ENCODE measurements at regions of chr1 and their contacts with region 1.

Region 1: GRCh38 chr1:55870106-55870505 is 654.9 kb upstream of the USP24 start:
- DNase-seq: no peak
- H3K4me3 ChIP-seq: no peak overlapping the region
- H3K27ac ChIP-seq: no peak overlapping the region
- H3K4me1 ChIP-seq: no peaks in the 10 kb centered on the region
- H3K27me3 ChIP-seq: no peaks in the 10 kb centered on the region
- CTCF ChIP-seq: no peak
- EP300 ChIP-seq: no peak
- POLR2A ChIP-seq: no peak

Region 2: GRCh38 chr1:55329091-55329490 is 541.0 kb before region 1 on chr1:
- intact Hi-C with region 1: loop called in 1 of 4 experiments (anchors 5 kb)
- DNase-seq: peak in 1 of 5 donors; percentile 43
- H3K4me3 ChIP-seq: no peak overlapping the region
- H3K27ac ChIP-seq: no peak overlapping the region
- H3K4me1 ChIP-seq: no peaks in the 10 kb centered on the region
- H3K27me3 ChIP-seq: no peaks in the 10 kb centered on the region
- CTCF ChIP-seq: no peak
- EP300 ChIP-seq: no peak
- POLR2A ChIP-seq: no peak

Measured in ovary (tissue), 10 donors.